Caco-2 (cell line): ENCODE measurements at regions of chr10 and their contacts with region 1.

Region 1: GRCh38 chr10:53997953-53998352 is 803.1 kb downstream of the PCDH15 start:
- DNase-seq: no peak
- H3K4me3 ChIP-seq: no peak overlapping the region
- H3K4me3 Mint-ChIP-seq: no peak overlapping the region
- H3K27ac Mint-ChIP-seq: no peak overlapping the region
- H3K4me1 ChIP-seq: no peaks in the 10 kb centered on the region
- H3K4me1 Mint-ChIP-seq: no peaks in the 10 kb centered on the region
- H3K27me3 ChIP-seq: no peaks in the 10 kb centered on the region
- H3K27me3 Mint-ChIP-seq: no peaks in the 10 kb centered on the region
- CTCF ChIP-seq: peak; percentile 59 to 69

Region 2: DNA sequence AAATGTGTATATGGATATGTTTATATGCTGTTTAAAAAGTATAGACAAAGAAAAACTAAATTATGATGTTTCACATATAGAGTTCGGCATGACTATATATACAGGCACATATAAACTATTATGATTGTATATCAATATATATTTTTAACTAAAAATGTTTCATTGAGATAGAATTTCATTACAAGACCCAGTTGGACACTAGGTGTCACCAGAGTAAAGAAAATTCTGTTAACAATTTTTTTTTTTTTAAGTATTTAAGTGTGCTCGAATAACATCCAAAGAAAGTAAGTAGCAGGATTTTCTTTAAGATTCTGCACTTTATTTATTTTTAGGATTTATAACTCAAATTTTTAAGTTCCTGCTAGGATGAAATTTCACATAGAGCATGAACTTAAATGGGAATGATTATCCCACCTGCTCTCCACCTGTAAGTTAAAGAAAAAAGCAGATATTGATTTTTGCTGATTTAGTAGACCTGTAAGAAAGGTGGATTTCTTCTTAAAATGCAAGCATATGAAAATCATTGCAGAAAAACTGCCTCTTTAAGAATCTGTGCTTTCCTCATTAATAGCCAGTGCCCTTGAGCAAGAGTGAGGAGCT is 158.4 kb before region 1 on chr10:
- CTCF ChIA-PET with region 1: no interaction called
- POLR2A ChIA-PET with region 1: no interaction called
- intact Hi-C with region 1: loop called (anchors 1 kb)
- DNase-seq: peak in 1 of 2 experiments; percentile 47
- H3K4me3 ChIP-seq: no peak overlapping the region
- H3K4me3 Mint-ChIP-seq: no peak overlapping the region
- H3K27ac Mint-ChIP-seq: no peak overlapping the region
- H3K4me1 ChIP-seq: no peaks in the 10 kb centered on the region
- H3K4me1 Mint-ChIP-seq: no peaks in the 10 kb centered on the region
- H3K27me3 ChIP-seq: no peaks in the 10 kb centered on the region
- H3K27me3 Mint-ChIP-seq: no peaks in the 10 kb centered on the region
- CTCF ChIP-seq: peak; percentile 54 to 65

Region 3: DNA sequence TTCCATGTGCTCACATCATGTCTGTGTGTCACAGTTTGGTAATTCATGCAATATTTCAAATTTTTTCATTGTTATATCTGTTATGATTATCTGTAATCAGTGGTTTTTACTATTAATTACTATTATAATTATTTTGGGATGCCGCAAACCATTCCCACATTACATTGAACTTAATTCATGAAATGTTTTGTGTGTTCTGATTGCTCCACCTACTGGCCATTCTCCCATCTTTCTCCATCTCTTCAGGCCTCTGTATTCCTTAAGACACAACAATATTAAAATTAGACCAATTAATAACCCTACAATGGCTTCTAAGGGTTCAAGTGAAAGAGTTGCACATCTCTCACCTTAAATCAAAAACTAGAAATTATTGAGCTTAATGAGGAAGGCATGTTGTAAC is 404.6 kb after region 1 on chr10:
- CTCF ChIA-PET with region 1: no interaction called
- POLR2A ChIA-PET with region 1: no interaction called
- intact Hi-C with region 1: loop called (anchors 1 kb)
- DNase-seq: peak in 1 of 2 experiments; percentile 59
- H3K4me3 ChIP-seq: no peak overlapping the region
- H3K4me3 Mint-ChIP-seq: no peak overlapping the region
- H3K27ac Mint-ChIP-seq: no peak overlapping the region
- H3K4me1 ChIP-seq: no peaks in the 10 kb centered on the region
- H3K4me1 Mint-ChIP-seq: no peaks in the 10 kb centered on the region
- H3K27me3 ChIP-seq: no peaks in the 10 kb centered on the region
- H3K27me3 Mint-ChIP-seq: peaks cover 4% of the 10 kb centered on the region
- CTCF ChIP-seq: peak; percentile 80 to 89

Region 4: GRCh38 chr10:54800741-54801421 is 802.9 kb after region 1 on chr10 and contains the start of gene PCDH15:
- CTCF ChIA-PET with region 1: no interaction called
- POLR2A ChIA-PET with region 1: no interaction called
- intact Hi-C with region 1: loop called (anchors 10 kb)
- DNase-seq: peak; percentile 60 to 63
- H3K4me3 ChIP-seq: no peak within 1 kb of the TSS
- H3K4me3 Mint-ChIP-seq: no peak within 1 kb of the TSS
- H3K27ac Mint-ChIP-seq: no peak within 1 kb of the TSS
- H3K4me1 ChIP-seq: no peaks in the 10 kb centered on the region
- H3K4me1 Mint-ChIP-seq: no peaks in the 10 kb centered on the region
- H3K27me3 ChIP-seq: no peaks in the 10 kb centered on the region
- H3K27me3 Mint-ChIP-seq: peaks cover 8% of the 10 kb centered on the region
- CTCF ChIP-seq: peak; percentile 44 to 73
- total RNA-seq, gene PCDH15: 0.02 and 0.07 TPM in 2 replicates

Region 5: GRCh38 chr10:55263327-55263726 is 1265.4 kb after region 1 on chr10:
- CTCF ChIA-PET with region 1: no interaction called
- POLR2A ChIA-PET with region 1: no interaction called
- intact Hi-C with region 1: loop called (anchors 5 kb)
- DNase-seq: no peak
- H3K4me3 ChIP-seq: no peak overlapping the region
- H3K4me3 Mint-ChIP-seq: no peak overlapping the region
- H3K27ac Mint-ChIP-seq: no peak overlapping the region
- H3K4me1 ChIP-seq: no peaks in the 10 kb centered on the region
- H3K4me1 Mint-ChIP-seq: no peaks in the 10 kb centered on the region
- H3K27me3 ChIP-seq: no peaks in the 10 kb centered on the region
- H3K27me3 Mint-ChIP-seq: peaks cover 9% of the 10 kb centered on the region
- CTCF ChIP-seq: peak in 1 of 2 experiments; percentile 0